Activated CD4-positive, alpha-beta T cell treated with anti-CD3 and anti-CD28 coated beads, Interleukin-2, amount 10 ng/mL, durations not matched to agents 24 days and 14 days (primary cell): ENCODE measurements at regions of chr4 and their contacts with region 1.

Region 1: GRCh38 chr4:109702950-109703663 is at the start of gene CASP6:
- DNase-seq: peak; percentile 94
- H3K4me3 Mint-ChIP-seq: peak within 1 kb of the TSS; percentile 94
- H3K27ac Mint-ChIP-seq: peak within 1 kb of the TSS; percentile 90
- H3K4me1 Mint-ChIP-seq: peaks cover 29% of the 10 kb centered on the region
- H3K27me3 Mint-ChIP-seq: no peaks in the 10 kb centered on the region
- total RNA-seq, gene CASP6: 19.3 and 23.6 TPM in 2 replicates

Region 2: DNA sequence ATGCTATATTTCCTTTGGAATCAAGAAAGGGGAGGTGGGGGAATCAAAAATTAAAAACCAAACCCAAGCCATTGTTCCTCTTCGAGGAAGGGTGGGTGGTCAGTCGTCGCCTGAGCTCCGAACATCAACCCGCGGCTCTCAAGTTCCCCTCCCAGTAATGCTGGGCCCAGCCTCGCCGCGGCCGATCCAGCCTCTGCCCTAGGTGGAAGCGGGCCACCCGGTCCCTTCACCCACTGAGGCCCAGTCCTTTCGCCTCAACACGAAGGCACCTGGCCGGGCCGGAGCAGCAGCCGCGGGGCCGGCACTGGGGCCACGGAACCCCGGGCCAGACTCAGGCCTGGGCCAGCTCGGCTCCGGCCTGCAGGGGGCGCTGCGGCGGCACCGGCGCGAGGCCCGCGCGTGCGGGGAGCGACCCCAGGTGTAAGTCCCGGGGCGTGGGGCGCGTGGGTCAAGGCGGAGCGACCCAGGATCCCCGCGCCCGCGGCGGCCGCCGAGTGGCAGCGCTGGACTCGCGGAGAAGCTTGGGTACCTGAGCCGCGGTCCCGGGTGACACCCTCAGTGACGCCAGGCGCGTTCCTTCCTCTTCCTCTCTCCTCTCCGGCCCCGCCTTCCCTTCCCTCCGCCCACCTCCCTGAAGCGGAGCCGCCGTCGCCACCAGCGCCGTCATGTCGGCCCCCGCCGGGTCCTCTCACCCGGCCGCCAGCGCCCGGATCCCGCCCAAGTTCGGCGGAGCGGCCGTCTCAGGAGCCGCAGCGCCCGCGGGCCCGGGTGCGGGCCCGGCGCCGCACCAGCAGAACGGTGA is 269.7 kb before region 1 on chr4 and contains the start of gene SEC24B:
- intact Hi-C with region 1: loop called (anchors 1 kb)
- DNase-seq: peak; percentile 97
- H3K4me3 Mint-ChIP-seq: peak within 1 kb of the TSS; percentile 90
- H3K27ac Mint-ChIP-seq: peak within 1 kb of the TSS; percentile 85
- H3K4me1 Mint-ChIP-seq: peaks cover 50% of the 10 kb centered on the region
- H3K27me3 Mint-ChIP-seq: no peaks in the 10 kb centered on the region
- total RNA-seq, gene SEC24B: 32.5 and 33.6 TPM in 2 replicates

Region 3: GRCh38 chr4:109648266-109648996 is 54.7 kb before region 1 on chr4:
- intact Hi-C with region 1: loop called (anchors 2 kb)
- DNase-seq: peak; percentile 75
- H3K4me3 Mint-ChIP-seq: peak overlapping the region; percentile 73
- H3K27ac Mint-ChIP-seq: peak overlapping the region; percentile 86
- H3K4me1 Mint-ChIP-seq: peaks cover 38% of the 10 kb centered on the region
- H3K27me3 Mint-ChIP-seq: no peaks in the 10 kb centered on the region

Region 4: DNA sequence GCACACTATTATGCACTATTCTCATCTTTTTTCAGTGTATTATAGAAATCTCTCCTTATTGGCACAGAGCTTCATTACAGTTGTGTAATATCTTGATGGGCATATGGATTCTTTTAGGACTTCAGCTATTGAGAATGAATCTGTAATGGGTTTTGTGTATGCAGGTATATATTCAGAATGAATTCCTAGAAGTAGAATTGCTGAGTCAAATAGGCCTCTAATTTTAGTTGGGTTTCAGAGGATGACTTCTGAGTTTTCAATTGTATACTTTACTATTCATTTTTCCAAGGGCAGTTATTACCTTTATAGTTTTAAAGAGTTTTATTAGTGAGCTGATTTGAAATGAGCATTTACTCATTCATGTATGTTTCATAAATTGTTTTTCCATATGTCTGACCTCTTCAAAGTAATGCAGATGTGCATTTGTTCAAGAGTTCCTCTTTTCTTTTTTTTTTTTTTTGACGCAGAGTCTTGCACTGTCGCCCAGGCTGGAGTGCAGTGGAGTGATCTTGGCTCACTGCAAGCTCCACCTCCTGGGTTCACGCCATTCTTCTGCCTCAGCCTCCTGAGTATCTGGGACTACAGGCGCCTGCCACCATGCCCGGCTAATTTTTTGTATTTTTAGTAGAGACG is 19.4 kb before region 1 on chr4:
- intact Hi-C with region 1: loop called (anchors 2 kb)
- DNase-seq: no peak
- H3K4me3 Mint-ChIP-seq: no peak overlapping the region
- H3K27ac Mint-ChIP-seq: no peak overlapping the region
- H3K4me1 Mint-ChIP-seq: peaks cover 20% of the 10 kb centered on the region
- H3K27me3 Mint-ChIP-seq: no peaks in the 10 kb centered on the region

Region 5: GRCh38 chr4:109690690-109691410 is 12.3 kb before region 1 on chr4:
- intact Hi-C with region 1: loop called (anchors 1 kb)
- DNase-seq: peak; percentile 67
- H3K4me3 Mint-ChIP-seq: peak overlapping the region; percentile 28
- H3K27ac Mint-ChIP-seq: peak overlapping the region; percentile 72
- H3K4me1 Mint-ChIP-seq: peaks cover 31% of the 10 kb centered on the region
- H3K27me3 Mint-ChIP-seq: no peaks in the 10 kb centered on the region

Region 6: GRCh38 chr4:109729718-109730618 is 26.9 kb after region 1 on chr4 and contains the start of gene PLA2G12A:
- intact Hi-C with region 1: loop called (anchors 1 kb)
- DNase-seq: peak; percentile 92
- H3K4me3 Mint-ChIP-seq: peak within 1 kb of the TSS; percentile 91
- H3K27ac Mint-ChIP-seq: peak within 1 kb of the TSS; percentile 78
- H3K4me1 Mint-ChIP-seq: peaks cover 16% of the 10 kb centered on the region
- H3K27me3 Mint-ChIP-seq: peaks cover 6% of the 10 kb centered on the region
- total RNA-seq, gene PLA2G12A: 9.0 and 11.4 TPM in 2 replicates